Ascending aorta (tissue), 2 donors: ENCODE measurements at regions of chr6 and their contacts with region 1.

Region 1: GRCh38 chr6:110682460-110682853 is 132.8 kb downstream of the CDK19 start:
- DNase-seq: peak in 1 of 2 donors; percentile 76
- H3K4me3 ChIP-seq: no peak overlapping the region
- H3K27ac ChIP-seq: peak overlapping the region in 1 of 2 donors; percentile 41
- H3K4me1 ChIP-seq: no peaks in the 10 kb centered on the region
- H3K27me3 ChIP-seq: no peaks in the 10 kb centered on the region
- CTCF ChIP-seq: peak; percentile 60 to 69 (median 67)

Region 2: GRCh38 chr6:110528101-110528929 is 154.1 kb before region 1 on chr6:
- intact Hi-C with region 1: loop called (anchors 10 kb)
- DNase-seq: peak in 1 of 2 donors; percentile 72
- H3K4me3 ChIP-seq: no peak overlapping the region
- H3K27ac ChIP-seq: peak overlapping the region in 1 of 2 donors; percentile 33
- H3K4me1 ChIP-seq: peaks cover 0 to 3% of the 10 kb centered on the region in 2 donors
- H3K27me3 ChIP-seq: no peaks in the 10 kb centered on the region
- CTCF ChIP-seq: peak; percentile 37 to 69 (median 64)

Region 3: GRCh38 chr6:110714143-110714542 is 31.7 kb after region 1 on chr6:
- intact Hi-C with region 1: no loop called
- DNase-seq: no peak
- H3K4me3 ChIP-seq: no peak overlapping the region
- H3K27ac ChIP-seq: no peak overlapping the region
- H3K4me1 ChIP-seq: no peaks in the 10 kb centered on the region
- H3K27me3 ChIP-seq: no peaks in the 10 kb centered on the region
- CTCF ChIP-seq: no peak

Region 4: GRCh38 chr6:110795271-110795670 is 112.8 kb after region 1 on chr6:
- intact Hi-C with region 1: no loop called
- DNase-seq: no peak
- H3K4me3 ChIP-seq: no peak overlapping the region
- H3K27ac ChIP-seq: no peak overlapping the region
- H3K4me1 ChIP-seq: no peaks in the 10 kb centered on the region
- H3K27me3 ChIP-seq: no peaks in the 10 kb centered on the region
- CTCF ChIP-seq: no peak

Region 5: GRCh38 chr6:110949679-110950285 is 267.3 kb after region 1 on chr6:
- intact Hi-C with region 1: loop called (anchors 1 kb)
- DNase-seq: no peak
- H3K4me3 ChIP-seq: no peak overlapping the region
- H3K27ac ChIP-seq: no peak overlapping the region
- H3K4me1 ChIP-seq: no peaks in the 10 kb centered on the region
- H3K27me3 ChIP-seq: no peaks in the 10 kb centered on the region
- CTCF ChIP-seq: peak; percentile 23 to 59 (median 47)